H1 (cell line): ENCODE measurements at regions of chr10 and their contacts with region 1.

Region 1: DNA sequence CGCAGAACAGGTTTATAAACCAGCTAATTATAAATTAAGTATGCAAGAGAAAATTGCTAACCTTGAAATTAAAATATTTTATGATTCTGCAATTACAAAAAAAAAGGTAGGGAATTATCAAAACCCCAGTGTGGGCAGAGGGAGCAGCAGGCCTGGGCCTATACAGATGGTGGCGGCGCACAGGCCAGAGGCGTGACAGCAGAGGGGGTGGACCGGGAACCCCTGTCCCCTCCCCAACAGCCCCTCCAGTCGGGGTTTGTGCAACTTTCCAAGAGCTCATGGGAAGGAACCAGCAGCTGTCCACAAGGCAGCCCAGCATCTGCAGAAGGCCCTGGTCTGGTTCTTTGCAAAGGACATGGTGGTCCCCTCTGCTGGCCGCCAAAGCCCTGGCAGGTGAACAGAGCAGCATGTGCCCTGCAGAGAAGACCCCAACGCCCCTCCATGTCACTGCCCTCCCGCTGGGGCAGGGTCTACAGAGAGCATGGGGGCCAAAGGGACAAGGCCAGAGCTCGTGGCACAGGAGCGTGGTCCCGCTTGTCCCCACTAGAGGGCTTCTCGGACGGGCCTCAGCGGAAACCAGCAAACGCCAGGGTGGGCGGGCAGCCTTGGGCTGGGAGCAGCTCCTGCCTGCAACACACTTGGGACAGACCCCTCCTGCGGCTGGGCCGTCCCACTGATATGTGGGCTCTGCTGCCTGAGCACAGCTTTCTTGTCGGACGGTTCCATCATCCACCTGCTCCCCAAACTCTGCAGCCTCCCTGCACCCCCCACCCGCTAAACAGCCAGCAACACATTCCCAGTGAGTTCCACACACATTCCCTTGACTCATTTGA is 75.1 kb downstream of the EBF3 start:
- DNase-seq: peak; percentile 65 to 93
- H3K4me3 ChIP-seq: no peak overlapping the region
- H3K27ac ChIP-seq: no peak overlapping the region
- H3K4me1 ChIP-seq: peaks cover 0 to 2% (median 0%) of the 10 kb centered on the region in 4 experiments; a peak in 3 of 7 replicates
- H3K27me3 ChIP-seq: no peaks in the 10 kb centered on the region
- CTCF ChIP-seq: peak; percentile 83 to 92 (median 85)
- EP300 ChIP-seq: no peak
- POLR2A ChIP-seq: no peak
- RAD21 ChIP-seq: peak; percentile 63 to 79

Region 2: DNA sequence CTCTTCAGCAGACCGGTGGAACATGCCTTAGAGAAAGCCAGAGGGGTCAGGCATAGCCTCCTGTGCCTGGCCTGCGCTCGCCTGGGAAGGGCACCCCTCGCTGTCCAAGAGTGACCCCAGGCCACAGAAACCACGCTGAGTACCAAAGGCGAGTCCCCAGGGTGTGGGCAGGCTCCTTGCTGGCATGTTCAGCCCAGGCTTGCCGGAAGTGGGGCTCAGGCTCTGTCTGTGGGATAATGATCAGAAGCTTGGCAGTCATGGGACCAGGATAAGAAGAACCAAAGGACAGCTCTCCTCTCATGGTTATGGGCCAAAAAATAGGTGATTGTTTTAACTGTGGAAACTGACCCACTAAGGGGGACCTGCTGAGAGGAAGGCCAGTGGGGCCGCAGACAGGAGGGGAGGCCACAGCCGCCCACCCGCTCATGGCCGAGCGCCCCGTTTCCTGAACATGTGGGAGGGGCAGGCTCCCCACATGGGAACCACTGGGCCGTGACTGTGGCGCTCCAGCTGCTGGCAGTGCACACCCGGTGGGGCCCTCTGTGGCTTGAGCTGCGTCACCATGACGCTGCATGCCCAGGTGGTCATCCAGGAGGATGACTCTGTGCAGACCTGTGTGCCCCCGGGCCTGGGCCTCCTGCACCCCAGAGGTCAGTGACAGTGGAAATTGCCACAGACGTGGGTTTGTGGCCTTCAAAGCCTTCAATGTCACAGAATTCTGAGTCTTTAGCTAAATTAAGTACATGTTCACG is 337.1 kb before region 1 on chr10:
- CTCF ChIA-PET with region 1: no interaction called
- POLR2A ChIA-PET with region 1: no interaction called
- DNase-seq: no peak
- H3K4me3 ChIP-seq: no peak overlapping the region
- H3K27ac ChIP-seq: no peak overlapping the region
- H3K4me1 ChIP-seq: no peaks in the 10 kb centered on the region
- H3K27me3 ChIP-seq: no peaks in the 10 kb centered on the region
- CTCF ChIP-seq: no peak
- EP300 ChIP-seq: no peak
- POLR2A ChIP-seq: no peak
- RAD21 ChIP-seq: no peak

Region 3: DNA sequence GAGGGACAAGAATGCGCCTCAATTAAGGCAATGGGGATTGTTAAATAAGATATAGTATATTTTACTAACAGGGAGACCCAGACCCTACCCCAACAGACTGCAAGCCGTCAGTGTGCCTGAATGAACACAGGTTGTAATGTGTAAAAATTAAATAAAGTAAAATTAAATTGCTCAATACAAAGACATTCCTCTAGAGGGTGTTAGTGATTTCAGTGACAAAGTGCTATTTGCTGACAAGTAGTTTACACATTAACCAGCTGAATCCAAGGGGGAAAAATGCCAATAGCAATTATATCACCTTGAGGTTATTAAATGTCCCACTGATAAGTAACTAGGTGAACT is 35.5 kb before region 1 on chr10:
- CTCF ChIA-PET with region 1: interaction called, 19 read pairs
- POLR2A ChIA-PET with region 1: no interaction called
- DNase-seq: no peak
- H3K4me3 ChIP-seq: no peak overlapping the region
- H3K27ac ChIP-seq: no peak overlapping the region
- H3K4me1 ChIP-seq: no peaks in the 10 kb centered on the region; a peak in 1 of 7 replicates
- H3K27me3 ChIP-seq: no peaks in the 10 kb centered on the region
- CTCF ChIP-seq: peak in 1 of 3 experiments; percentile 1; a peak in 1 of 4 replicates
- EP300 ChIP-seq: no peak
- POLR2A ChIP-seq: no peak
- RAD21 ChIP-seq: peak; percentile 21 to 34; a peak in 3 of 4 replicates

Region 4: DNA sequence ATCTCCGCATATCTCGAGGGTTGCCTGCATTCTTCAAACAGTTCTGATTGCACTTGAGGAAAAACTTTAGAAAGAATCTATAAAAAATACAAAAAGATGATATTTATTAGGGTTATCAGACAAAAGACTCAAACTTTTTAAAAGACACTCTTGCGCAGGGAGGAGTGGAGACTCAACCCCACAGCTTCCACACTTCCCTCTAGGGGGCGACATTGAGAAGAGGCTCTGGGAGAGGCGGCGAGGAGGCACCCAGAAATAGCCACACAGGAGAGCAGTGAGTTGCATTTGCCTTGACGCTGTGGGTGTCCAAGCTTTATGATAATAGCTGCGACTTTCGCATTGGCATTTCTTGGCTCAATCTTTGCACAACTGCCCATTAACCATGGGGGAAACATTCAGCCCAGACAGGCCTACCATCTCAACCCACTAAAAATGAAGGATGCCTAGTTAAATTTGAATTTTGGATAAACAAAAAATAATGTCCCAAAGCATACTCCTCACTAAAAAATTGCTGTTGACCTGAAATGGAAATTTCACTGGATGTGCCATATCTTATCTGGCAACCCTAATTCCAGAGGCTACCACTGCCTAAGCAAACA is 11.1 kb before region 1 on chr10:
- CTCF ChIA-PET with region 1: interaction called, 131 read pairs
- POLR2A ChIA-PET with region 1: no interaction called
- DNase-seq: peak in 1 of 2 experiments; percentile 76
- H3K4me3 ChIP-seq: no peak overlapping the region
- H3K27ac ChIP-seq: no peak overlapping the region
- H3K4me1 ChIP-seq: peaks cover 0 to 2% (median 0%) of the 10 kb centered on the region in 4 experiments; a peak in 1 of 7 replicates
- H3K27me3 ChIP-seq: no peaks in the 10 kb centered on the region
- CTCF ChIP-seq: peak; percentile 63 to 80 (median 74)
- EP300 ChIP-seq: no peak
- POLR2A ChIP-seq: no peak
- RAD21 ChIP-seq: peak; percentile 60 to 62

Region 5: GRCh38 chr10:129933456-129934092 is 44.6 kb after region 1 on chr10:
- CTCF ChIA-PET with region 1: interaction called, 12 read pairs
- POLR2A ChIA-PET with region 1: no interaction called
- DNase-seq: no peak
- H3K4me3 ChIP-seq: no peak overlapping the region
- H3K27ac ChIP-seq: no peak overlapping the region
- H3K4me1 ChIP-seq: peaks cover 0 to 4% (median 0%) of the 10 kb centered on the region in 4 experiments; a peak in 1 of 7 replicates
- H3K27me3 ChIP-seq: no peaks in the 10 kb centered on the region
- CTCF ChIP-seq: no peak
- EP300 ChIP-seq: no peak
- POLR2A ChIP-seq: no peak
- RAD21 ChIP-seq: no peak

Region 6: DNA sequence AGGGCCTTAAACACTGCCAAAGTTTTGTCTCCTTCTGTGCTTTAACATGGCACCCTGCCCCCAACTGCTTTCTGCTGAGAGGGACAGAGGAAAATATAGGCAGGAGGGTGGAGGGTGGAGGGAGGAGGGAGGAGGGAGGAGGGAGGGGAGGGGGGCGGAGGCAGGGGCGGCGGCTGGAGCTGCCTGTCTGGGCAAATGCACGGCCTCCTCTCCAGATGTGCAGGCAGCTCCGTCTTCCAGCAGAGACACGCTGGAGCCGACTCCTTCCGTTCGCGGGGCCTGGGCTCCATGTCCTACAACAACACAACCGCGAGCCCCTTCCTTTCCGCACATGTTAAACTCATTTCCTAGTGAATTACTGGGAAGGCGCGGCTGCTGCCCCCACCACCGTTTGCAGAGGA is 60.9 kb after region 1 on chr10:
- CTCF ChIA-PET with region 1: interaction called, 11 read pairs
- POLR2A ChIA-PET with region 1: no interaction called
- DNase-seq: no peak
- H3K4me3 ChIP-seq: peak overlapping the region in 3 of 4 experiments; percentile 24 to 51 (median 28); a peak in 4 of 8 replicates
- H3K27ac ChIP-seq: no peak overlapping the region
- H3K4me1 ChIP-seq: peaks cover 0 to 5% (median 3%) of the 10 kb centered on the region in 4 experiments; a peak in 3 of 7 replicates
- H3K27me3 ChIP-seq: peaks cover 4 to 22% (median 18%) of the 10 kb centered on the region in 4 experiments; a peak in 5 of 7 replicates
- CTCF ChIP-seq: no peak
- EP300 ChIP-seq: no peak
- POLR2A ChIP-seq: no peak
- RAD21 ChIP-seq: no peak